ENCODE measurements at regions of chr3 and their contacts with region 1.

Region 1: GRCh38 chr3:132456571-132456970 is 39.3 kb downstream of the DNAJC13 start:
- DNase-seq: no peak

Region 2: DNA sequence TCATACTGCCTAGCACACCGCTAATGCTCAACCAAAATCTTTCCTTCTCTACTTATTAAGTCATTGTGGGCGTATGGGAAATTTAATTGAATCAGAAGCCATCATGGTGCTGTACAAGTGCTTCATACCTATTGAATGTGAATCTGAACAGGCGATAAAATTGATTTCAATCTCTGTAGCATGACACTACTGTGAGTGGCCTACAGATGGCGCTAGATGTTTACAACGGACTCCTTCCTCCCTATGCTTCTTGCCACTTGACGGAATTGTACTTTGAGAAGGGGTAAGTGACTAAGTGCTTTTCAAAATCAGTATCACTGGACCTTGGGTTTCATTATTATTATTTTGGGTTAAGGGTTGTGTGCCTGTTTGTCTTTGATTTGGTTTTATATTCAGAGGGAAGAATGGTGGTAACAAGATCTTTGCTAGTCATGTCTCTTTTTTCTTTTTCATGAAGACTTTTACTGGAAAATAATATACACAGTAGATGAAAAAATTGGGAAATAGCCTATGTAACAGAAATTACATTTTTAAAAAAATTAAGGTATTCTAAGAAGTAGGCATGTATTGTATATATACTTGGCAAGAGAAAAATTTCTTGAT is 103.9 kb before region 1 on chr3:
- intact Hi-C with region 1: loop called (anchors 10 kb)
- DNase-seq: no peak